GM10248 (cell line): ENCODE measurements at regions of chr16 and their contacts with region 1.

Region 1: DNA sequence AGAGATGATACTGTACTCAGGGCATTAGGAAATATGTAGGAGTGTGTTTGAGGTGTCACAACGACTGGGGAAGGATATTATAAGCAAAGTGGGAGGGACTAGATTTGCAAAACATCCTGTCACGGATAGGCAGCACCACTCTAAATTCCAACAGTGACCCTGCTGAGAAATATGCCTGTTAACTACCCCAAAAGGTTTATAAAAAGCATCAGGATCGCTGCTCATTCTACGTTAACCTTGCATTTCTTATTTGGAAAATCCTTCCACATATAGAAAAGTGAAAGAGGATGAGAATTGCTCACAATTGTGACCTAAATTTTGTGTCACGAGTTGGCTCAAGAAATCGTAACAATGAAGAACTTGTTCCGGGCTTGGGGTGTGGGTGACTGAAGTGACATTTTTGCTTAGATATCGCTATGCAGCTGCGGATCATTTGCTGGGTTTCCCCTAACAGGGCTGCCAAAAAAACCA is 51.6 kb downstream of the N4BP1 start:
- DNase-seq: no peak
- CTCF ChIP-seq: no peak

Region 2: DNA sequence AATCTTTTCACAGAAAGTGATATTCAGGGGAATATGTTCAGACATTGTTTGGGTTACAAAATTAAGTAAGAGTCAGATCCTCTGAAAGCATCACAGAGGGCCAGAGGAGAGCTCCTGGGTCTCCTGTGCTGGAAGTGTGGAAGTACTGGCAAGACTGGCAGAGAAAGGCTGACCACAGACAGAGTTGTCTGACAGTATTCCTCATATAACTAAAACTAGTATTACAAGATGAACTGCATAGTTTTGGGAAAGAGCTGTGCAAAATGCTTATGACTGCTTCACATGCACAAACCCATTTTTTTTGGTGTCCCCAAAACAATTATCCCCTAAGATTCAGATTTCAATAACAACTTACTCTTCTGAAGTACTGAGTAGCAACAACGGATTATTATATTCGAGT is 16.4 kb after region 1 on chr16:
- CTCF ChIA-PET with region 1: interaction called, 26 read pairs
- POLR2A ChIA-PET with region 1: no interaction called
- DNase-seq: no peak
- CTCF ChIP-seq: no peak